GM10248 (cell line): ENCODE measurements at regions of chr22 and their contacts with region 1.

Region 1: GRCh38 chr22:41697126-41697775 is 2.1 kb upstream of the MEI1 start:
- DNase-seq: peak; percentile 88
- CTCF ChIP-seq: peak; percentile 97

Region 2: GRCh38 chr22:41725510-41726110 is 28.4 kb after region 1 on chr22:
- CTCF ChIA-PET with region 1: interaction called, 82 read pairs
- POLR2A ChIA-PET with region 1: no interaction called
- DNase-seq: no peak
- CTCF ChIP-seq: no peak

Region 3: DNA sequence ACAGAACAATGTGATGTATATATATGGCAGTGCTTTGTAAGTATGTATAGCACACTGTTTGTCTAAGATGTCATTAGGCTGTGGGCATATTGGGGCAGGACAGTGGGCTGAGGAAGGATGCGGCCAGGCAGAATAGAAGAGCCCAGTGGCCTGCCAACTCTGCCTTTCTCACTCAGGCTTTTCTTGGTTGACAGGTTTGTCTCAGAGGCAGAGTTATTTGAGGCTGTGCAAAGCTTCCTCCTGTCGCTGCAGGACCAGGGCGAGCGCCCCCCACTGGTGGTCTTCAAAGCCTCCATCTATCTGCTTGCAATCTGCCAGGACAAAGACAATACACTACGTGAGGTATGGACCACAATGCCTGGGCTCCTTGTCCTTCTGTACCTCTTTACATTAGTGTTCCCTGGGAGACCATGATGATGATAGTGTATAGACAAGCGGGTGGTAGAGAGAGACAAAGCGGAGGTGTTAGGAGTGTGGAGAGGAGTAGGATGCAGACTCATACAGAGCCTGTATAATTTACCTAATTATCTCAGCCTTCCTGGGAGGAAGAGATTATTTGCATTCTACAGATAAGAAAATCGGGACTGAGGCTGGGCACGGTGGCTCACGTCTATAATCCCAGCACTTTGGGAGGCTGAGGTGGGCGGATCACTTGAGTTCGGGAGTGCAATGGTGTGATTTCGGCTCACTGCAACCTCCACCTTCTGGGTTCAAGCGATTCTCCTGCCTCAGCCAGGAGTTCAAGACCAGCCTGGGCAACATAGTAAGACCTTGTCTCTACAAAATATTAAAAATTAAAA is 65.9 kb after region 1 on chr22:
- CTCF ChIA-PET with region 1: interaction called, 15 read pairs
- POLR2A ChIA-PET with region 1: no interaction called
- DNase-seq: peak; percentile 57
- CTCF ChIP-seq: peak; percentile 40

Region 4: GRCh38 chr22:41786418-41786817 is 89.2 kb after region 1 on chr22:
- CTCF ChIA-PET with region 1: interaction called, 26 read pairs
- POLR2A ChIA-PET with region 1: no interaction called
- DNase-seq: no peak
- CTCF ChIP-seq: no peak

Region 5: GRCh38 chr22:41935509-41935908 is 238.3 kb after region 1 on chr22:
- CTCF ChIA-PET with region 1: interaction called, 81 read pairs
- POLR2A ChIA-PET with region 1: interaction called, 6 read pairs
- DNase-seq: no peak
- CTCF ChIP-seq: no peak

Region 6: GRCh38 chr22:41951898-41952474 is 254.7 kb after region 1 on chr22 and contains the start of gene SMIM45:
- CTCF ChIA-PET with region 1: interaction called, 53 read pairs
- POLR2A ChIA-PET with region 1: no interaction called
- DNase-seq: no peak
- CTCF ChIP-seq: no peak